Tibial artery (tissue), 4 donors: ENCODE measurements at regions of chr2 and their contacts with region 1.

Region 1: DNA sequence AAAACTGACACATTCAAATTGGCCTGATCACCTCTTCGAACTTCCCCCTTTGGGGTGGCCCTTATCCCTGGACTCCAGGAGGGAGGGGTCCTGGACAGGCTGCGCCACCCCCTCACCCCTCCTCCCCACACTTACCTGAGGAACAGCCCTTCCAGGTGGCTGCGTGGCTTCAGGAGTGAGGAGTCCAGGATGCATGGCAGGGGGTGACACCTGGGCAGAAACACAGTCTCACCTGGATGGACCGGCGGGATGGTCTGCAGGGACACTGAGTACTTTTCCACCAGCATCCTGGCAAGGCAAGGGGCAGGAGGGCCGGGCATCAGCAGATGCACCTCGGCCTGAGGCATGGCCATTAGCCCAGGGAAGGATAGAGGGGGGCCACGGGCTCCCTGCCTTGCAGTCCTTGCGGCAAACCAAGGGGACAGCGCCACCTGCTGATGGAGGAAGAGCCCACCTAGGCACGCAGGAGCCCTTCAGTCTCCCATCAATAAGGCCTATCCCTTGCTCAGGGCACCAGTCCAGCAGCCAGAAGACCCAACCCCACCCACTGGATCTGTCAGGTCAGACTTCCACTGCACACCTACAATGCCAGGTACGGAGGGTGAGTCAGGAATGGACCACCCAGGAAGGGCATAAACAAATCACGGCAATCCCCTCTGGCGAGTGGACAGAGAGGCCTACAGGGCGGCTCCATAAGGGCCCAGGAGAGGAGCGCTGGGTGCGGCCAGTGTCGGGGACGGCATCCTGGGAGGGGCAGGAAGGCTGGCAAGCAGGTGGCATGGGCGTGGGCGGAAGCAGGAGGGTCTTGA is 26.0 kb downstream of the FAM178B start:
- DNase-seq: peak; percentile 80 to 88
- H3K4me3 ChIP-seq: no peak overlapping the region
- H3K27ac ChIP-seq: no peak overlapping the region
- H3K4me1 ChIP-seq: peaks cover 0 to 3% (median 0%) of the 10 kb centered on the region in 4 donors
- H3K27me3 ChIP-seq: no peaks in the 10 kb centered on the region
- CTCF ChIP-seq: peak; percentile 82 to 86

Region 2: GRCh38 chr2:96848264-96848663 is 112.1 kb before region 1 on chr2:
- intact Hi-C with region 1: loop called (anchors 2 kb)
- DNase-seq: no peak
- H3K4me3 ChIP-seq: no peak overlapping the region
- H3K27ac ChIP-seq: no peak overlapping the region
- H3K4me1 ChIP-seq: no peaks in the 10 kb centered on the region
- H3K27me3 ChIP-seq: no peaks in the 10 kb centered on the region
- CTCF ChIP-seq: no peak

Region 3: GRCh38 chr2:98091738-98092137 is 1131.4 kb after region 1 on chr2:
- intact Hi-C with region 1: no loop called
- DNase-seq: peak in 1 of 2 donors; percentile 25
- H3K4me3 ChIP-seq: no peak overlapping the region
- H3K27ac ChIP-seq: no peak overlapping the region
- H3K4me1 ChIP-seq: peaks cover 0 to 9% (median 5%) of the 10 kb centered on the region in 4 donors
- H3K27me3 ChIP-seq: no peaks in the 10 kb centered on the region
- CTCF ChIP-seq: no peak